ENCODE measurements at regions of chr15 and their contacts with region 1.

Region 1: GRCh38 chr15:95259513-95259912 is 1028.2 kb downstream of the MCTP2 start:
- DNase-seq: peak; percentile 71 to 78
- ATAC-seq: peak; percentile 92
- H3K4me3 ChIP-seq: no peak overlapping the region
- H3K27ac ChIP-seq: no peak overlapping the region
- H3K4me1 ChIP-seq: peaks cover 0 to 7% of the 10 kb centered on the region in 2 donors
- H3K27me3 ChIP-seq: no peaks in the 10 kb centered on the region

Region 2: GRCh38 chr15:95025924-95026728 is 233.4 kb before region 1 on chr15:
- intact Hi-C with region 1: loop called in 1 of 2 experiments (anchors 10 kb)
- DNase-seq: peak; percentile 52 to 78
- ATAC-seq: peak; percentile 29
- H3K4me3 ChIP-seq: no peak overlapping the region
- H3K27ac ChIP-seq: no peak overlapping the region
- H3K4me1 ChIP-seq: no peaks in the 10 kb centered on the region
- H3K27me3 ChIP-seq: no peaks in the 10 kb centered on the region

Region 3: DNA sequence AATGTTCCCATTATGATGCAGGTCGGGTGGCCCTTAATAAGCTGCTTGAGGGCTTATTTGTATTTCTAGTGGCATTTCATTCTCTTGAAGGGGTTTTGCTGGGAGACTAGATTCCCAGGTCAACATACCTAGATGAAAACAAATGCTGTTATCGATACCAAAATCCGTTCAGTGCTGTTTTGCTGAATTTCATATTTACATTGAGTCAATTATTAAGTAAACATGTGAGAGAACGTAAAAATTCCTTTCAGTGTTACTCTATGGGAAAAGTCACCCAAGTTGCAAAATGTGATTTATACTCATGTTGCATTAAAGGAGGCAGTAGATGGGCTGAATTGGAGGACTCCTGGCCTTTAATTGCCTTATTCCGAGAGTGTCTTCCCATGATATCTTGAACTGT is 59.7 kb after region 1 on chr15:
- intact Hi-C with region 1: no loop called
- DNase-seq: no peak
- ATAC-seq: no peak
- H3K4me3 ChIP-seq: no peak overlapping the region
- H3K27ac ChIP-seq: no peak overlapping the region
- H3K4me1 ChIP-seq: no peaks in the 10 kb centered on the region
- H3K27me3 ChIP-seq: no peaks in the 10 kb centered on the region

Region 4: DNA sequence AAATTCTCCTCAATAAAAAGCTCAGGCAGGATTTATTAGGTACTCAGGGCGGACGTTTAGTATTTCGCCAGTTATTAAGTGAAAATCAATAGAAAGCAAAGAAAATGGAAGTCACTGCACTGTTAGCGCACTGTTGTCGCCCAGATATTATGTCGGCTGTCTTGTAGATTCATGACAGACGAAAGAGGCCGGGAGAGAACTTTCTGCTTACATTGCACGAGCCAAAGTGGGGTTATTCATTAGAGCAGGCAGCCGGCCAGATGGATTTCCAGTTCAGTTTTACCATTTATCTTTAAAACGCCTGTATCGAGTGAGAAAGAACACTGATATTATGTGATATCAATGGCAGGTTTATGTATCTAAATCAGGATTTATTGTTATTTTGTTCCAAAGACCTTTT is 205.0 kb after region 1 on chr15:
- intact Hi-C with region 1: loop called in 1 of 2 experiments (anchors 10 kb)
- DNase-seq: no peak
- ATAC-seq: peak; percentile 53
- H3K4me3 ChIP-seq: no peak overlapping the region
- H3K27ac ChIP-seq: peak overlapping the region in 1 of 2 donors; percentile 63
- H3K4me1 ChIP-seq: peaks cover 0 to 1% of the 10 kb centered on the region in 2 donors
- H3K27me3 ChIP-seq: no peaks in the 10 kb centered on the region

Region 5: DNA sequence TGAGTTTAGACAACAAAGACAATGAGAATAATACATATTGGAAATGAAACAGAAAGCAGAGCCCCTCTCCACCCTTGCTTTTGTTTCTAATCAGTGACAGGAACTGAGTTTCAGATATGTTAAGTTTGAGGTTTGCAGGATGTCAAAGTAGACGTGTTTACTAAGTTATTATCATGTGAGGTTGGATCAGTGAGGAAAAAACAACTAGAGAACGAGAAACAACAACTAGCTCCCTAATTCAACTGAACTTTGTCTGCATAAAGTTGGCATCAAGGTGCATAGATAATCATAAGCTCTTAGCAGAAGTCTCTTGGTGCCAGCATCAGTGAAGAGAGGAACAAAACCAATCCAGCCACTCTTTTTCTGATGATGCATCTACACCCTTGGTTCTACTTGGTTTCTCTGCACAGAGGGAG is 579.9 kb after region 1 on chr15:
- intact Hi-C with region 1: loop called (anchors 5 to 10 kb)
- DNase-seq: no peak
- ATAC-seq: no peak
- H3K4me3 ChIP-seq: no peak overlapping the region
- H3K27ac ChIP-seq: peak overlapping the region in 1 of 2 donors; percentile 76
- H3K4me1 ChIP-seq: no peaks in the 10 kb centered on the region
- H3K27me3 ChIP-seq: no peaks in the 10 kb centered on the region

Region 6: DNA sequence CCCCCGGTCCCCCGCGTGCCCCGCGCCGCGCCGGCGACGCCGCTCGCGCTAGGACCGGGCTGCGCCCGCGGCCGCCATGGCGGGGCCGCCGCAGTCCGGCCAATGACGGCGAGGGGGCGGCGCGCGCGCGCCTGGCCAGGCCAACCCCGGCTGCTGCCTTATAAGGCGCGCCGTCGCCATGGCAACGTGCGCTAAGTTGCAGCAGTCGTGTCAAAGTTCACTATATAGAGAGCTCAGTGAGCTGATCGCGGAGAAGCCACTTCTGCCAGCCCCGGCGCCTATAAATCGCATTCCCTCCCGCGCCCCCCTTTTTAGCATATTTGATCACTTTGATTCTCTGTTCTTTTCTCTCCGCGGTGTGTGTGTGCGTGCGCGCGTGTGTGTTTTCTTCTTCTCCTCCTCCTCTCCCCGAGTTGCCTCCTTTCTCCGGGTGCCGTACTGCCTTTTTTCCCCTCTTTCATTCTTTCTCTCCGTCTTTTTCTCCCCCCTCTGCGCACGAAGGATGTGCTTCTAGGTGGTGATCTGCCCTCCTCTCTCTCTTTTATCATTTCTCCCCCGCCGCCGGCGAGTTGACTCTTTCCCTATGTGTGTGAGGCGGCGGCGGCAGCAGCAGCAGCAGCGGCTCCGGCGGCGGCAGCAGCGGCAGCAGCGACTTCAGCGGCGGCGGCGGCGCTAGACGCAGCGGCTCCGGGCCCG is 1071.1 kb after region 1 on chr15 and contains the start of gene NR2F2:
- intact Hi-C with region 1: loop called in 1 of 2 experiments (anchors 5 kb)
- DNase-seq: peak; percentile 96 to 97
- ATAC-seq: peak; percentile 88
- H3K4me3 ChIP-seq: peak within 1 kb of the TSS; percentile 89 to 98
- H3K27ac ChIP-seq: peak within 1 kb of the TSS; percentile 20 to 98
- H3K4me1 ChIP-seq: no peaks in the 10 kb centered on the region
- H3K27me3 ChIP-seq: no peaks in the 10 kb centered on the region
- total RNA-seq, gene NR2F2: 102 to 132 TPM

Measured in aorta (tissue), 5 donors.